Right cardiac atrium (tissue), 5 donors: ENCODE measurements at regions of chr20 and their contacts with region 1.

Region 1: DNA sequence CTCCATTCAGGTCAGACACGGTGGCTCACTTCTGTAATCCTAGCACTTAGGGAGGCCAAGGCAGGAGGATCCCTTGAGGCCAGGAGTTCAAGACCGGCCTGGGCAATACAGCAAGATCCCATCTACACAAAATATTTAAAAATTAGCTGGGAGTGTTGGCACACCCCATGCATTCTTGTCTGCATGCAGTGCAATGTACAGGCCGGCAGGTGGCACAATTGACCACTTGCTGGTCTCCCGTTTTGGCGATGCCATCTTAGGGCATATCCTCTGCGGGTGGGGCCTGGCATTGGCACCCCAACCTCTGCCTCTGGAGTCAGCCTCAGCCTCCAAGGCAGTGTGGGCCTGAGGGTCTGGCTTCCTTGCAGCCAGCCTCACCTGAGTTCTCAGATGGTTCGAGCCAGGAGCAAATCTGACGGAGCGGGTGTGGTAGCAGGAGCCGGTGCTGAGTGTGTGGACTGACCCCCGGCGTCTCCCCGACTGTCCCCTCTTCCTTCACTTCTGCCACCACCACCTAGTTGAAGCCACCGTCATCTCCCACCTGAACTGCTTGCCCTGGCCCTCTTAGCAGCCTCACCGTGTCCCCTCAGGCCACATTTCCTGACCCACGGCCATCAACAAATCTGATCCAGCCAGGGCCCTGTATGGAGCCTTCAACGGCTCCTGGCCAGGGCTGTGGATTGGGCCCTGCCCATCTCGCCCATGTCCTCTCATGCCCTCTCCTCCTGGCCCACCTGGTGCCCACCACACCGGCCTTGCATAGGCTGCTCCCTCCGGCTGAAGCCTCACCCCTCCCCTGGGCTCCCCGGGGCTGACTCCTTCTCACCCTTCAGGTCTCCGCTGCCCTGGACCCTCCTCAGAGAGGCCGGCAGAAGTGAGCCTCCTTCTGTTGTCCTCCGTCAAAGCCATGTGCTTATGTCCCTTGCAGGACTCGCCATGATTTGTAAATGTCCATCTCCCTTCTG is 44.0 kb downstream of the EFCAB8 start:
- DNase-seq: peak; percentile 52 to 74 (median 71)
- ATAC-seq: peak; percentile 68 to 70
- H3K4me3 ChIP-seq: no peak overlapping the region
- H3K27ac ChIP-seq: no peak overlapping the region
- H3K4me1 ChIP-seq: no peaks in the 10 kb centered on the region
- H3K27me3 ChIP-seq: no peaks in the 10 kb centered on the region

Region 2: GRCh38 chr20:33076662-33077372 is 174.1 kb after region 1 on chr20:
- intact Hi-C with region 1: loop called in 1 of 4 experiments (anchors 5 kb)
- DNase-seq: no peak
- ATAC-seq: no peak
- H3K4me3 ChIP-seq: no peak overlapping the region
- H3K27ac ChIP-seq: no peak overlapping the region
- H3K4me1 ChIP-seq: no peaks in the 10 kb centered on the region
- H3K27me3 ChIP-seq: no peaks in the 10 kb centered on the region

Region 3: DNA sequence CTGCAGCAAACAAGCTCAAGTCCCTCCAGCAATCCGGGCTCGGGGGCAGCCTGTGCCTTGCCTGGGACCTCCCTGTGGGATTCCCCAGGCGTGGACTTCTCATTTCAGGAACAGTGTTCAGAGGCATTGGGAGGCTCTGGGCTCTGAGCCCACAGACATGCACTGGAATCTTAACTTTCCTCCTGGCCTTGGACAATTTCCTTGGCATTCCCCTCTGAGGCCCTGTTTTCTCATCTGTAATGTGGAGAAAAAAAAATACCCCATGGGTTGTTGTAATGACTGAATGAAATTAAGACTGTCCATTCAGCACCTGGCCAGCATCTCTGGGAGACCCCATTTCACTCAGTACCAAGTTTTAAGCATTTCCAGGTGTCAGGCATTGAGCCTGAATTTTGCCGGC is 194.3 kb after region 1 on chr20:
- intact Hi-C with region 1: loop called (anchors 2 to 5 kb)
- DNase-seq: peak; percentile 58 to 92 (median 79)
- ATAC-seq: peak in 1 of 2 donors; percentile 73
- H3K4me3 ChIP-seq: no peak overlapping the region
- H3K27ac ChIP-seq: no peak overlapping the region
- H3K4me1 ChIP-seq: no peaks in the 10 kb centered on the region
- H3K27me3 ChIP-seq: no peaks in the 10 kb centered on the region

Region 4: DNA sequence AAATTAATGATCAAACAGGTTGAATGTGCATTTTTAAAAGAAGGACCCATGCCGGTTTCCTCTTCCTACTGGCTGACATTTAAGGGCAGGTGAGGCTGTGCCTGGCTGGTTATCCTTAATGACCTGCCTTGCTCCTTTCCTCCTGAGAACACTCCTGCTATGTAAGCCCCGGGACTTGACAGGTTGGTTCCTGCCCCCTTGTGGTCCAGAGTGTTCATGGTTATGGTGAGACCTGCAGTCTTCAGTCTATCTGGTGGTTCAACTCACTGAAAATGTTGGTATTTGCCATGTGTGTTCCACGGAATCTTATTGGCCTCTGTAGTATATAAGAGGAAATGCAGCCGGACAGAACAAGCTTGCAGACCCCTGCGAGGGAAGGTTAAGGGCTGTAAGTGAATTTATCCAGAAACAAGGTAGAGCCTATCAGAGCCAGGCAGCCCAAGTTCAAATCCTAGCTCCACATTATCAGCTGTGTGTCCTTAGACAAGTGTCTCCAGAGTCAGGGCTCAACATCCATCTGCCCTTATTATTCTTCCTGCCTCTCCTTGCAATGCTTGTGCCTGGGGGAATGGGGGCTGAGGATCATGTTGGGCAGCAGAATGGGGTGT is 309.2 kb after region 1 on chr20:
- intact Hi-C with region 1: no loop called
- DNase-seq: no peak
- ATAC-seq: no peak
- H3K4me3 ChIP-seq: no peak overlapping the region
- H3K27ac ChIP-seq: no peak overlapping the region
- H3K4me1 ChIP-seq: no peaks in the 10 kb centered on the region
- H3K27me3 ChIP-seq: peaks cover 3% of the 10 kb centered on the region

Region 5: GRCh38 chr20:33299111-33299603 is 396.4 kb after region 1 on chr20:
- intact Hi-C with region 1: loop called (anchors 5 to 10 kb)
- DNase-seq: peak; percentile 66 to 86 (median 86)
- ATAC-seq: peak; percentile 68 to 82
- H3K4me3 ChIP-seq: no peak overlapping the region
- H3K27ac ChIP-seq: no peak overlapping the region
- H3K4me1 ChIP-seq: no peaks in the 10 kb centered on the region
- H3K27me3 ChIP-seq: no peaks in the 10 kb centered on the region